ENCODE measurements at regions of chr14 and their contacts with region 1.

Region 1: GRCh38 chr14:100375963-100376735 is 53.0 kb downstream of the SLC25A47 start:
- DNase-seq: peak; percentile 94 to 95 (median 95)
- ATAC-seq: peak; percentile 91
- H3K4me3 ChIP-seq: peak within 1 kb of the TSS; percentile 39 to 91
- H3K27ac ChIP-seq: peak within 1 kb of the TSS; percentile 65 to 92 (median 78)
- H3K4me1 ChIP-seq: peaks cover 29% of the 10 kb centered on the region
- H3K27me3 ChIP-seq: no peaks in the 10 kb centered on the region
- CTCF ChIP-seq: no peak
- POLR2A ChIP-seq: peak; percentile 50 to 85 (median 82)

Region 2: DNA sequence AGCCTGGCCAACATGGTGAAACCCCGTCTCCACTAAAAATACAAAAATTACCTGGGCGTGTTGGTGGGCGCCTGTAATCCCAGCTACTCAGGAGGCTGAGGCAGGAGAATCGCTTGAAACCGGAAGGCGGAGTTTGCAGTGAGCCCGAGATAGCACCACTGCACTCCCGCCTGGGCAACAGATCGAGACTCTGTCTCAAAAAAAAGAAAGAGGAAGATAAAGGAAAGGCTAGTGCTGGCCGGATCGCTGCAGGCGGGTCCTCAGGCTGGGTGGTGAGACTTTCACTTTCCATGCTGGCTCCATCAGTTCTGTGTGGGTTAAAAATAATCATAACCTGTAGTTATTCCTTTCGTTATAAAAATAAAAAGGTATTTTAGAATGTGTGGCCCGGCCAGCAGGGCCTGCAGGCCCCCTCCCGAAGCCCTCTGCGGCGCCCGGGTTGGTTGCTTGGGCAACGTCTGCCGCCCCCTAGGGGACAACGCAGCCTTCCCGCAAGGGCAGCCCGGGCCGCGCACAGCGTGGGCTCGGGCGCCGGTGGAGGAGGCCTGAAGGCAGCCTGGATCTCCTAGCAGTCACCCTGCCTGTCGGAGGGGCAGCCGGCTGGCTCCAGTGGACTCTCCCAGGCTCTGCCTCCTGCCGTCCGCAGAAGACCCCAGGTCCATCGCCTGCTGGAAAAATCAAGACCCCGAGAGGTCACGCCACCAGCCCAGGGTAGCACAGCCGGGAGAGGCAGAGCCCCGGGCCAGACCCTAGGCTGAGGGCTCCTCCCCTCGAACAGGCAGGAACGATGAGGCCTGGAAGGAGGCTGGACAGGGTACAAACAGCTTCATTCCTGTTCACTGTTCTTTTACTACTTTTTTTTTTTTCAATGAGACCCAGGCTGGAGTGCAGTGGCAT is 58.0 kb before region 1 on chr14:
- intact Hi-C with region 1: loop called (anchors 10 kb)
- DNase-seq: peak; percentile 63 to 80 (median 72)
- ATAC-seq: peak; percentile 89
- H3K4me3 ChIP-seq: no peak overlapping the region
- H3K27ac ChIP-seq: peak overlapping the region in 2 of 4 donors; percentile 9 to 43
- H3K4me1 ChIP-seq: peaks cover 12% of the 10 kb centered on the region
- H3K27me3 ChIP-seq: no peaks in the 10 kb centered on the region
- CTCF ChIP-seq: peak; percentile 64 to 86 (median 68)
- POLR2A ChIP-seq: no peak

Region 3: DNA sequence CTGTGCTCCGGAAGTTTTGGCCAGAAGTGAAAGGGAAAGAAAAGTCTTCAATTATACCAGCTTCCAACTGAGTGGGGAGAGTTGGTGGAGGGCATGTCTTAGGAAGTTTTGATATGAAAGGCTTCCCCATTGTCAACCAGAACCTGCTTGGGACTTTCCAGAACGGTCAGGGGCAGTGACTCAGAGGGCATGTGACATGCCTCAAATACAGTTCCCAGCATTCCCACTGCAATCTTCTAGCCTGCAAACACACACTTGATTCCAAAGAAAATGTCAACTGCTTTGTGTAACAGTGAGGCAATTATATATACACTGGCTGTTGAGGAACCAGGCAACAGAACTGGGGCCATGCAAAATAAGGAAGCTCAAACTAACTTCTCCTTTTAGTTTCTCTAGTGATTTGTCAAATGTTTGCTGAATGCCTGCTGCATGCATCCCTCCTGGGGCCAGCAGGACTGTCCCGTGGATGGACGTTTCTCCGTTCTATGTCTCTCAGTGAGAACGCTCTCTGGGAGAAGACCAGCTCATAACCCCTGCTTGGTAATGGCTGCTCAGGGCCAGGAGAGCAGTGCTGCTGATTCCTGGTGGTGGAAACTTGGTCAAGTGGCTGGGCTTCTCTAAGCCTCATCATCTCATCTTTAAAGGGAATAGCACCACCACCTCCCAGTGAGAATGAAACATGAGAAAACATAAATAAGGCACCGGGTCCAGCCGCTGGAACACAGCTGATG is 34.7 kb before region 1 on chr14:
- intact Hi-C with region 1: no loop called
- DNase-seq: peak in 3 of 4 donors; percentile 37 to 78 (median 63)
- ATAC-seq: peak; percentile 85
- H3K4me3 ChIP-seq: no peak overlapping the region
- H3K27ac ChIP-seq: peak overlapping the region in 3 of 4 donors; percentile 37 to 83 (median 68)
- H3K4me1 ChIP-seq: peaks cover 15% of the 10 kb centered on the region
- H3K27me3 ChIP-seq: no peaks in the 10 kb centered on the region
- CTCF ChIP-seq: no peak
- POLR2A ChIP-seq: peak in 1 of 3 donors; percentile 17